Activated T-helper 1 cell treated with anti-CD3 and anti-CD28 coated beads, Interleukin-12 subunit alpha, Interleukin-12 subunit beta, Interleukin-2, Interleukin-4 antibody, amounts not matched to agents 30 ng/mL and 10 ng/mL and 1 ng/mL, durations not matched to agents 14 hours and 24 hours and 36 hours (primary cell): ENCODE measurements at regions of chr18 and their contacts with region 1.

Region 1: DNA sequence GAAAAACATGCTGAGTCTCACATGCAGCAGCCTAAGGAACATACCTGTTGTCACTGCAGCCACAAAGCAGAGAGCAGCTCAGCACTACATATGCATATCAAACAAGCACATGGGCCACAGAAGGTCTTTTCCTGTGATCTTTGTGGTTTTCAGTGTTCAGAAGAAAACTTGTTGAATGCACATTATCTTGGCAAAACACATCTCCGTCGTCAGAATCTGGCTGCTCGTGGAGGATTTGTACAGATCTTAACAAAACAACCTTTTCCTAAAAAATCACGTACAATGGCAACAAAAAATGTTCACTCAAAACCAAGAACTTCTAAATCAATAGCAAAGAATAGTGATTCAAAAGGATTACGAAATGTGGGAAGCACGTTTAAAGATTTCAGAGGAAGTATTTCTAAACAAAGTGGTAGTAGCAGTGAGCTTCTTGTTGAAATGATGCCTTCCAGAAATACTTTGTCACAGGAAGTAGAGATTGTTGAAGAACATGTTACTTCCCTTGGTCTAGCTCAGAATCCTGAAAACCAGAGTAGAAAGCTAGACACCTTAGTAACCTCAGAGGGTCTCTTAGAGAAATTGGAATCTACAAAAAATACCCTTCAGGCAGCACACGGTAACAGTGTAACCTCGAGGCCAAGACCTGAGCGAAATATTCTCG is 34.1 kb downstream of the ZNF407 start:
- DNase-seq: peak; percentile 19
- H3K4me3 Mint-ChIP-seq: peak overlapping the region; percentile 80
- H3K27ac Mint-ChIP-seq: peak overlapping the region; percentile 90
- H3K4me1 Mint-ChIP-seq: peaks cover 53% of the 10 kb centered on the region
- H3K27me3 Mint-ChIP-seq: no peaks in the 10 kb centered on the region

Region 2: DNA sequence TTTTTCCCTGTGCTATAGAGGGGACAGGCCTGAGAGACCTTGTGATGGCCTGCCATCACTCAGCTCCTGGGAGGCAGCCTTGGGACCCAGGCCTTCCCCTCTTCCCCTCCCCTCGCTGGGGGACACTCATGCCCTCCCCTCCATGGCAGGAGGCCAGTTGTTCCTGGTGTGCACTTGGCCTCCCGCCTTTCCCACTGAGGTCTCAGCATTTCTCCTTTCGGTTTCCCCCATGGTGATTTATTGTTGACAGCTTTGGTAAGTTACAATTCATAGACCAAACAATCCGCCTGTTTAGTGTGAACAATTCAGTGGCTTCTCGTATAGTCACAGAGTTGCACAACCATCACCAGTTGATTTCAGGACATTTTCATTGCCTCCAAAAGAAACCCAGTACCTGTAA is 107.7 kb before region 1 on chr18:
- intact Hi-C with region 1: no loop called
- DNase-seq: no peak
- H3K4me3 Mint-ChIP-seq: no peak overlapping the region
- H3K27ac Mint-ChIP-seq: no peak overlapping the region
- H3K4me1 Mint-ChIP-seq: no peaks in the 10 kb centered on the region
- H3K27me3 Mint-ChIP-seq: peaks cover 4% of the 10 kb centered on the region

Region 3: DNA sequence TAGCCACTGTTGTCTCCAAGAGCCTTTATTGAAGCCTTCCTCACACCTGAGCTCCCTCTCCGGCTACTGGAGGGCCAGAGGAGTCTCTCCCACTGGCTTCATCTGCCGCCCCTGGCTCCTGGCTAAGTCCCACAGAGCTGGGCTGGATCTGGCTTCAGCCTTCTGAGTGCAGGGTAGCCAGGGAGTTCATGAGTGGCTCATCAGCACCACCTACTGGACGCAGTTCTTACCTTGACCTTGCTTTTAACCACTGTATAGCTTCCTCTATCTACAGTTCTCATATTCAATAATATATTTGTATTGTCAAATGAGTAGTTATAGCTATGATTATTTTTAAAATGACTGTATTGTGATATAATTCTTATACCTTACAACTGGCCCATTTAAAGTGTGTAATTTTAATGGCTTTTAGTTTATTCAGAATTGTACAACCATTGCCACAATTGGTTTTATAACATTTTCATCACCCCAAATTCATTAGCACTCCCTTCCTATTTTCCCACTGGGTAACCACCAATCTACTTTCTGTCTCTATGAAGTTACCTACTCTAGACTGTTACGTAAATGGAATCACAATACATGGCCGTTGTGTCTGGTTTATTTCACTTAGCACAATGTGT is 79.7 kb before region 1 on chr18:
- intact Hi-C with region 1: no loop called
- DNase-seq: peak; percentile 60
- H3K4me3 Mint-ChIP-seq: no peak overlapping the region
- H3K27ac Mint-ChIP-seq: no peak overlapping the region
- H3K4me1 Mint-ChIP-seq: peaks cover 6% of the 10 kb centered on the region
- H3K27me3 Mint-ChIP-seq: peaks cover 13% of the 10 kb centered on the region

Region 4: GRCh38 chr18:74597662-74598349 is 33.9 kb before region 1 on chr18 and contains the start of gene ZNF407:
- intact Hi-C with region 1: loop called (anchors 1 kb)
- DNase-seq: peak; percentile 83
- H3K4me3 Mint-ChIP-seq: peak within 1 kb of the TSS; percentile 97
- H3K27ac Mint-ChIP-seq: peak within 1 kb of the TSS; percentile 96
- H3K4me1 Mint-ChIP-seq: peaks cover 45% of the 10 kb centered on the region
- H3K27me3 Mint-ChIP-seq: no peaks in the 10 kb centered on the region
- total RNA-seq, gene ZNF407: 19.8 and 21.4 TPM in 2 replicates